ENCODE measurements at regions of chr2 and their contacts with region 1.

Region 1: GRCh38 chr2:237674731-237675276 is 47.4 kb downstream of the LRRFIP1 start:
- DNase-seq: peak; percentile 80
- ATAC-seq: peak; percentile 77
- H3K4me3 Mint-ChIP-seq: peak overlapping the region; percentile 90
- H3K27ac Mint-ChIP-seq: peak overlapping the region; percentile 99
- H3K4me1 Mint-ChIP-seq: peaks cover 90% of the 10 kb centered on the region
- H3K27me3 Mint-ChIP-seq: no peaks in the 10 kb centered on the region
- CTCF ChIP-seq: no peak

Region 2: GRCh38 chr2:237603718-237604362 is 71.0 kb before region 1 on chr2:
- CTCF ChIA-PET with region 1: interaction called, 5 read pairs
- POLR2A ChIA-PET with region 1: interaction called, 5 read pairs
- intact Hi-C with region 1: loop called (anchors 1 kb)
- DNase-seq: peak; percentile 33
- ATAC-seq: peak; percentile 97
- H3K4me3 Mint-ChIP-seq: peak overlapping the region; percentile 75
- H3K27ac Mint-ChIP-seq: peak overlapping the region; percentile 93
- H3K4me1 Mint-ChIP-seq: peaks cover 27% of the 10 kb centered on the region
- H3K27me3 Mint-ChIP-seq: peaks cover 2% of the 10 kb centered on the region
- CTCF ChIP-seq: no peak

Region 3: DNA sequence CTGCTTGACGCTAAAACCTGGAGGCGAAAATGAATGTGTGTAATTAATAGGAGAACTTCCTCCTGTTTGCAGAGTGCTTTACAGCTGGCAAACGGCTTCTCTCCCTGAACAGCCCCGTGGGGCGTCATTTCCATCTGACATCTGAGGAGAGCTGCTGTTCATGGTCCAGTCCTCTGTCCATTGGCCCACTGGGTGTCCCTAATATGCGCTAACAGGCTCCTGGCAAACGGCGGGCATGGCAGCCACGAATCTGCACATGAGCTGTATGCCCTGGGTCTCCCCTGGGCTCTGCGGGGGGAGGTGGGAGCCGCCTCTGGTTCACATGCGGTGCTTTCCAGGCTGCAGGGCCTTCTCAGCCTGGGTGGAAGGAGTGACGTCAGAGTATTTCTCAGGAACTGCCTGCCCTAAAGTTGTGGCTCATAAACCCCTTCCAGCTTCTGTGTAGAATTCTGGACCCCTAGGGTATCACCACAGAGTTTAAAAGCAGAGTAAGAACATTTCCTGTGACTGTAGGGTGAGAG is 25.8 kb after region 1 on chr2:
- CTCF ChIA-PET with region 1: interaction called, 125 read pairs
- POLR2A ChIA-PET with region 1: interaction called, 241 read pairs
- intact Hi-C with region 1: loop called (anchors 1 kb)
- DNase-seq: peak; percentile 59
- ATAC-seq: peak; percentile 61
- H3K4me3 Mint-ChIP-seq: peak overlapping the region; percentile 62
- H3K27ac Mint-ChIP-seq: peak overlapping the region; percentile 82
- H3K4me1 Mint-ChIP-seq: peaks cover 96% of the 10 kb centered on the region
- H3K27me3 Mint-ChIP-seq: no peaks in the 10 kb centered on the region
- CTCF ChIP-seq: no peak

Region 4: DNA sequence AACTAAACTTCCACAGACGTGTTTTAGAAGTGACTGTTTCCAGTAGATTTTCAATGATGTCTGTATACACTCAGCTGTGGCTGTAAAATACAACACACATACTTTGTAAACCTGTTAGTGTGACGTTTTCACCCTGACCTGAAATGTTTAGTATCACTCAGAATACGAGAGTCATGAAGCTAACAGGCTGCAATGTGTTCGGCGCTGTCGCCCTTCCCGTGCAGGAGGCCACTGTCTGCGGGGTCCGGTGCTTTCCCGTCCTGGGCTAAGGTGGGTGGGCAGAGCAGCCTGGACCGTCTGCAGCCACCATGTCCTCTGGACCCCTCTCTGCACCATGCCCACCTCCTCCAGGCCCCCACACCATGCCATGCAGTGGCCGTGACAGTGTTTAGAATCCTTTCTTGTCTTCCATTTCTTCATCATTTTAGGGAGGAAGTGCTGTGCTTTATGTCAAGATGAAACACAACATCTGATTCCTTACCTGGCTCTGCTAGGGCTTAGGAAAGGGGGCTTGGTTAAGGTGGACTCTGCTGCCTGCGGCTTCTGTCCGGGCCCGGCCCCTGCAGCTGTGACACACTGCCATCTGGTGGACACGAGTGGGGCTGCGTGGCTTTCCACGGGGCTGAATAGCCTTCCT is 69.9 kb after region 1 on chr2:
- CTCF ChIA-PET with region 1: interaction called, 216 read pairs
- POLR2A ChIA-PET with region 1: interaction called, 10 read pairs
- intact Hi-C with region 1: loop called (anchors 1 kb)
- DNase-seq: peak; percentile 76
- ATAC-seq: peak; percentile 92
- H3K4me3 Mint-ChIP-seq: no peak overlapping the region
- H3K27ac Mint-ChIP-seq: peak overlapping the region; percentile 12
- H3K4me1 Mint-ChIP-seq: peaks cover 36% of the 10 kb centered on the region
- H3K27me3 Mint-ChIP-seq: no peaks in the 10 kb centered on the region
- CTCF ChIP-seq: peak; percentile 98

Region 5: GRCh38 chr2:237766340-237766739 is 91.5 kb after region 1 on chr2:
- CTCF ChIA-PET with region 1: no interaction called
- POLR2A ChIA-PET with region 1: no interaction called
- intact Hi-C with region 1: no loop called
- DNase-seq: no peak
- ATAC-seq: no peak
- H3K4me3 Mint-ChIP-seq: no peak overlapping the region
- H3K27ac Mint-ChIP-seq: no peak overlapping the region
- H3K4me1 Mint-ChIP-seq: no peaks in the 10 kb centered on the region
- H3K27me3 Mint-ChIP-seq: no peaks in the 10 kb centered on the region
- CTCF ChIP-seq: no peak

Region 6: DNA sequence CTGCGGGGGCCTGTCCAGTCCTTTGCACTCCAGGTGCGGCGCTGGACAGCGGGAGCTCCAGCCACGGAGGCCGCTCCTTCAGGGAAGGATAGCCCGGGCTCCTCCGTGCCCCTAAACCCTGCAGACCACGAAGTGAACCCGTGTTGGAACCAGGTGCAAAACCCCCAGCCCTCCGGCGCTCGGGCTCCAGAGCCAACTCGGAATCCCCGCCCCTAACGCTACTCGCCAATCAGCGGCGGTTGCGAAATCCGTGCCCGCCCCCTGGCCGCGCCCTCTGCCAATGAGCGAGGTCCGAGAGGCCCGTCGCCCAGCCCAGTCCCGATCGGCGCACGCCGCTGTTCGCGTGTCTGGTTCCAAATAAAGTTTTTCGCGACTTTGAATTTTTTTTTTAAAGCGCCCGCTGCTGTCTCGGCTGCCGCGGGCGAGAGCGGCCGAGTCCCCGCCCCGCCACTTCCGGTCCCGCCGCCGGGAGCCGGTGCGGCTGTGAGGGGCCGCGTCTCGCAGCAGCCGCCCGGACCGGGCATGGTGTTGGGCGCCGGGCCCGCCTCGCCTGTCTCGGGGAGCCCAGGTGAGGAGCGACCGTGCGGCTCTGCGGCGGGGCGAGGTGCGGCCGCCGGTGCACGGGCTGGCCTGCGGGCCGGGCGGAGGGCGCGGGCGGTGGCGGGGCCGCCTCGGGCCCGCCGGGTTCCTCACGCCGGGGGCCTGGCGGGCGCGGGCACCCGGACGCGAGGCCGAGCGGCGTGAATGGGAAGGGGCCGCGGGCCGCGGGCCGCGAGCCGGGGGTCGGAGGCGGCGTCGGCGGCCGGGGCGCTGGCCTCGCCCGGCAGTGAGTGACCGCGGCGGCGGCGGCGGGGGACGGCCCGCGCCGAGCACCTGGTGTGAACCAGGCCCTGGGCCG is 292.0 kb after region 1 on chr2 and contains the start of gene UBE2F:
- CTCF ChIA-PET with region 1: no interaction called
- POLR2A ChIA-PET with region 1: no interaction called
- intact Hi-C with region 1: loop called (anchors 5 kb)
- DNase-seq: peak; percentile 97
- ATAC-seq: peak; percentile 95
- H3K4me3 Mint-ChIP-seq: peak within 1 kb of the TSS; percentile 84
- H3K27ac Mint-ChIP-seq: peak within 1 kb of the TSS; percentile 82
- H3K4me1 Mint-ChIP-seq: peaks cover 34% of the 10 kb centered on the region
- H3K27me3 Mint-ChIP-seq: no peaks in the 10 kb centered on the region
- CTCF ChIP-seq: no peak
- total RNA-seq, gene UBE2F: 32.4 and 41.2 TPM in 2 replicates

Region 7: GRCh38 chr2:238263204-238264071 is 588.6 kb after region 1 on chr2:
- CTCF ChIA-PET with region 1: no interaction called
- POLR2A ChIA-PET with region 1: no interaction called
- intact Hi-C with region 1: loop called (anchors 1 kb)
- DNase-seq: peak; percentile 53
- ATAC-seq: peak; percentile 57
- H3K4me3 Mint-ChIP-seq: no peak overlapping the region
- H3K27ac Mint-ChIP-seq: no peak overlapping the region
- H3K4me1 Mint-ChIP-seq: peaks cover 3% of the 10 kb centered on the region
- H3K27me3 Mint-ChIP-seq: no peaks in the 10 kb centered on the region
- CTCF ChIP-seq: peak; percentile 54

Measured in activated B cell treated with CpG ODN at 0.5 μM for 24 hours (primary cell).